ENCODE measurements at regions of chr22 and their contacts with region 1.

Region 1: DNA sequence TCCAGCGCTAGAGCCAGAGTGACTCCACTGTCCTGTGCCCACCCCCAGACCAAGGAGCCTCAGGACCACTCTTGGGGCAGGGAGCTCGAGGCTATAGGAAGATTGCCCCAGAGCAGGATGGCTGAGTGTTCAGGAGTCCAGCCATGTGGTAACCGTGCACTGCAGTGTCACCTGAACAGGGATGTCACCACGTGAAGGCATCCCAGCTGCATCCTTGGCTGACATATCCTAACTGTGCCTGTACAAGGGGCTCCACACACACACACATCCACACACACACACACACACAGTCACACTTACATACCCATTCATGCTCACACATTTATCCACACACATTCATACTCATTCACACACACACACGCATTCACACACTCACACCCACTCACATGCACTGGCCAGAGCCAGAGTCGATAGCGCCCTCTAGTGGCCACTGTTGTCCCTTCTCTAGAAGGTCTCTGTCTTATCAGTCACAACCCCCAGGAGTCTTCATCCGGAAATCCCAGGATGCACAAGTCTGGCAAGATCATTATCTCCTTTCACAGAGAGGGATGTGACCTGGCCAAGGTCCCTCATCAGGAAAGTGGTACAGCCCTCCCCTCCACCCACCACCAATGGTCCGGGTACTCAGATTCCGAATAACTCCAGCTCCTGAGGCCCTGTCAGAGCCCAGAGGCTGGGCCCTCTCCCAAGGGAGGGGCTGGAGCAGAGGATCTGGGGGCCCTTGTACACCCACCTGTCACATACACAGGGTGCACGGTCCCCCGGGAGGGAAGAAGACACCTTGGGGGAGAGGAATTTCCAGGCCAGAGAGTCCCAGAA is 55.1 kb downstream of the IGLL5 start:
- DNase-seq: peak in 1 of 3 donors; percentile 55
- ATAC-seq: peak; percentile 45 to 70
- H3K4me3 ChIP-seq: no peak overlapping the region
- H3K27ac ChIP-seq: no peak overlapping the region
- H3K4me1 ChIP-seq: no peaks in the 10 kb centered on the region
- H3K27me3 ChIP-seq: no peaks in the 10 kb centered on the region

Region 2: GRCh38 chr22:22125579-22126468 is 816.9 kb before region 1 on chr22:
- intact Hi-C with region 1: no loop called
- DNase-seq: no peak
- ATAC-seq: no peak
- H3K4me3 ChIP-seq: no peak overlapping the region
- H3K27ac ChIP-seq: no peak overlapping the region
- H3K4me1 ChIP-seq: no peaks in the 10 kb centered on the region
- H3K27me3 ChIP-seq: no peaks in the 10 kb centered on the region

Region 3: GRCh38 chr22:22855617-22856308 is 87.0 kb before region 1 on chr22:
- intact Hi-C with region 1: loop called in 1 of 4 experiments (anchors 10 kb)
- DNase-seq: peak in 1 of 3 donors; percentile 66
- ATAC-seq: peak in 1 of 2 donors; percentile 32
- H3K4me3 ChIP-seq: no peak overlapping the region
- H3K27ac ChIP-seq: no peak overlapping the region
- H3K4me1 ChIP-seq: no peaks in the 10 kb centered on the region
- H3K27me3 ChIP-seq: no peaks in the 10 kb centered on the region

Region 4: DNA sequence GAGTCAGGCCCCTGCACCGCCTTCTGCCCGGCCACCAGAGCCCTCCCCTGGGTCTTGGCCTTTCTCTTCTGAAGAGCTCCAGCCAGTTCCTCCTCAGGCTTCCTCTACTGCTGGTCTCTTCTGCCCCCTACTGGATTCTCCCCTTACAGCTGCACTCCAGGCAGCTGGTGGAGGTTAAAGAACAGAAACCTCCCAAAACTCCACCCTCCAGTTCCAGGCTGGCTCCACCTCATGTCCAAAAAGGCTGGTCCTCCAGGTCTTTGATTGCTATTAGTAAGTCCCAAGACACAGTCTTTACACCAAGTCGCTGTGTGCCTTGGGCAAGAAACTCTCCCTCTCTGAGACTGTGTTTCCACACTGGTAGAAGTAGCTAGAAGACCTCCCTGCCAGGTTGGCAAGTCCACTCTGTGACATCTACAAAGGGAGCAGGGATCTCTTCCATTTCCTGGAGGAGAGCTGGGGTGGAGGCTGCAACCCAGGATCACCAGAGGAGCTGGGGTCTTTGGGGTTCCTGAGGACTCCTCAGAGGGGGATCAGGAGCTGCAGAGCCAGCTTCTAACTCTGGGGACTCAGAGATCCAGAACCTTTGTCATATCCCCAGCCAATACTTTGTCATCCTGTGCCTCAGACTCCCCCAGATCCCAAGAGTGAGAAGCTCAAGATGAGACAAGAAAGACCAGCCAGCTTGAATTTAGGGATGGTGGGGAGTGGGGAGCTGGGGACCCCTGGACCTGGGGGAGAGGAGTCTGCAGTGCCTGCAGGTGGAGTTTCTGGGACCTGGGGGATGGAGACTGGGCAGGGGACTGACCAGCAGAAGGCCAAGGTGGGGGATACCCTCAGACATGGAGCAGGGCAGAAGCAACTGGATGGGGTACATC is 58.5 kb before region 1 on chr22:
- intact Hi-C with region 1: loop called in 1 of 4 experiments (anchors 10 kb)
- DNase-seq: peak in 2 of 3 donors; percentile 44 to 70
- ATAC-seq: peak; percentile 62
- H3K4me3 ChIP-seq: no peak overlapping the region
- H3K27ac ChIP-seq: no peak overlapping the region
- H3K4me1 ChIP-seq: no peaks in the 10 kb centered on the region
- H3K27me3 ChIP-seq: no peaks in the 10 kb centered on the region